Gastrocnemius medialis (tissue), 4 donors: ENCODE measurements at regions of chr20 and their contacts with region 1.

Region 1: DNA sequence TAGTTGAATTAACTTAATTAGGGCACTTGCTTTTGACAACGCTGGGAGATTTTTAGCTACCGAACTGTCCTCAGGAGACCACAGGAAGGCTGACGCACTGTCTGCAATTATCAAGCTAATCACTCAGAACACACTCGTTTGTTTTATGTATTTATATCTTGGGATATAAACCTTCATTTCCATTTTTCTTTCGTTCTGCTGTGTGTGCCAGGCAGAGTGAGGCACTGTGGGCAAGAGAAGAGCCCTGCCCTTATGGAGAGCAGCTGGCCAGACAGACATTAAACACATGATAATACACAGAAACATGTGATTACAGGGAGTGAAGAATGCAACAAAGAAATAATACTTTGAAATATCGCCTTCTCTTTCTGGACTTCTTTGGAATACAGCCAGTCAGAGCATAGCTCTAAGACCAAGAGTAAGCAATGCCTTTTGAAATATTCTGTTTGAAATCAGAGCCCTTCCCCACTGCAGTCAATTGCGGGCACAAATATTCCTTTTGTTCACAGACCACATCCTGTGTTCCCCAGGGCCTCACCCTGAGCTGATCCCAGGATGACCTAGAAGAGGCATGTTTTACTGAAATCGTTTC is 96.8 kb downstream of the ANKRD60 start:
- DNase-seq: no peak
- ATAC-seq: no peak
- H3K4me3 ChIP-seq: no peak overlapping the region
- H3K27ac ChIP-seq: peak overlapping the region in 2 of 4 donors; percentile 12 to 23
- H3K4me1 ChIP-seq: no peaks in the 10 kb centered on the region
- H3K27me3 ChIP-seq: peaks cover 0 to 3% (median 0%) of the 10 kb centered on the region in 3 donors
- CTCF ChIP-seq: no peak
- POLR2A ChIP-seq: no peak

Region 2: DNA sequence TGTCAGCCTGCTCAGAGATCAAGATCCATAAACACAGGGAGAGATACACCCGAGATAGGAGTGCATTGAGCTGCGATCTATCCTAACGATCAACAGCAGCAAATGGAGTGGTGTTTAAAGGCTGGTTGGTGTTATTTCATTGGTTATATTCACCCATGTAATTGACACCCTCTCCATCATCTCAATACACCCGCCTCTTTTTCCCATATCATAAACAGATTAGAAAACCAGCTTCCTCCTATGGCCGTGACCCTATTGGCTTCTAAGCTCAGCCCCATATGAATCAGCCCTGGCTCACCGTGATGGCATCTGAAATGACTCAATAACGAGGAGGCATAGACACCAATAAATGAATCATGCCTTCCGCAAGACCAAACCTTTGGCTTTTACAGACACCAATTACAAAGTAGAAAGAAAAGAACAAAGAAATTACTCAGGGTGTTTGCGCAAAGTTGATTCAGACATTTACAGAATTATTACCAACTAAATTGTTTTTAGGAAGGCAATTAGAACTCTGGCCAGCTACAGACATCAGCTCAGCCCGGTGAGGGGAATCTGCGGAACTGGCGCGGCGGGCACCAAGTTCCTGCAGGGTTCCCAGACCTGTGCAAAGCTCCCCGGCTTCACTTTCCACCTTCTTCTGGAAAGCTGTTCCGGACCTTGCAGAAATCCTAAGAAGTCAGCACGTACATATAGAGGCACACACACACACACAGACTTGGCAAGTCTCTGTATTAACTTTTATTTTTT is 433.4 kb before region 1 on chr20:
- in situ Hi-C with region 1: no loop called
- intact Hi-C with region 1: no loop called
- DNase-seq: no peak
- ATAC-seq: no peak
- H3K4me3 ChIP-seq: no peak overlapping the region
- H3K27ac ChIP-seq: no peak overlapping the region
- H3K4me1 ChIP-seq: peaks cover 17 to 26% of the 10 kb centered on the region in 2 donors
- H3K27me3 ChIP-seq: no peaks in the 10 kb centered on the region
- CTCF ChIP-seq: no peak
- POLR2A ChIP-seq: no peak

Region 3: DNA sequence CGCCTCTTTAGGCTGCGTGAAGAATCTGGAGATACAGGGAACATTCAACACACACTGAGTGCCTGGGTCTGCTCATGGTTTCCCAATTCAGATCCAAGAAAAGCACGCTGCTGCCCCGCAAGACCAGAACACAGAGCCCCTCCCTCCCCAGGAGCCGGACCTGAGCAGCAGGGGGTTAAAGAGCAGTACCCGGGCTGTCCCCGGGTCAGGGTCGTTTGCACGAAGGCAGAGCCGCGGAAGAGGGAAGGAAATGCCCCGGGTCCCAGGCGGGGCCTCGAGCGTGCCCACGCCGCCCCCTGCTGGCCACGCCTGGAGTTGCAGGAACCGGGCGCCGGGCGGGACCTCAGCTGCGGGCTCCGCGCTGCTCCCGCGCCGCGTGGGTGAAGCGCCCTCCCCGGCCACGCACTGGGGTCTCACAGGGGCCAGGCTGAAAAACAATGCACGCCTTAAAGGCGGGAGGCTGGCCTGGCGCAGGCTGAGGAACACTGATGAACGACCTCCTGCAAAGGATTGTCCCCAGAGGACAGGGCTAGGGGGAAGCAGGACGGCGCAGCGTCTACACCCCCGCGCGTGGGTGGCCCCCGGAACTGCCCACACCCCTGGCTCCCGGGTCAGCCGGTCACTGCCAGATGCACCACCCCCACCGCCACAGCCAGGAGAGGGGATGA is 47.9 kb after region 1 on chr20:
- in situ Hi-C with region 1: no loop called
- intact Hi-C with region 1: loop called (anchors 5 kb)
- DNase-seq: no peak
- ATAC-seq: peak; percentile 38 to 61
- H3K4me3 ChIP-seq: peak overlapping the region in 3 of 4 donors; percentile 10 to 46 (median 32)
- H3K27ac ChIP-seq: no peak overlapping the region
- H3K4me1 ChIP-seq: no peaks in the 10 kb centered on the region
- H3K27me3 ChIP-seq: peaks cover 0 to 7% (median 2%) of the 10 kb centered on the region in 3 donors
- CTCF ChIP-seq: peak; percentile 85 to 95 (median 91)
- POLR2A ChIP-seq: no peak